MCF 10A (cell line): ENCODE measurements at regions of chr10 and their contacts with region 1.

Region 1: GRCh38 chr10:75401569-75402485 is at the start of gene ZNF503:
- DNase-seq: peak; percentile 97
- H3K4me3 Mint-ChIP-seq: peak within 1 kb of the TSS; percentile 80
- H3K27ac Mint-ChIP-seq: peak within 1 kb of the TSS; percentile 51
- H3K4me1 Mint-ChIP-seq: peaks cover 5% of the 10 kb centered on the region
- H3K27me3 Mint-ChIP-seq: no peaks in the 10 kb centered on the region
- CTCF ChIP-seq: no peak
- total RNA-seq, gene ZNF503: 7.3 and 8.1 TPM in 2 replicates

Region 2: DNA sequence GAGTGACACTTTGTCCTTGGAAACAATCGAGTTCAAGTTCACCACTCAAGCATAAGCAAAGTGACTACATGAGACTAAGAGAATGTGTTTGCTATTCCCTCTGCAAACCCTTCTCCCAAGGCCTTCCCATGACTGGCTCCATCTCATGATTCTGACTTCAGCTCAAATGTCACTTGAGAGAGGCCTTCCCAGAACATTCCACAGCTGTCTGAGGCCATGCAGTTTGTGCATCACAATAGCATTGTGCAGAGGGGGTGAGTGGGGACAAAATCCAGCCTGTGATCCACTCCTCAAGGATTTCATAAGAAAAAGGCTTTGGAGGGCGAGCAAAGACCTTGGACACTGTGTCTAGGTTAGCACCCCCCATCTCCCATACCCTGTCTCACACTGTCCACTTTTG is 22.7 kb after region 1 on chr10:
- CTCF ChIA-PET with region 1: interaction called, 5 read pairs
- POLR2A ChIA-PET with region 1: interaction called, 54 read pairs
- intact Hi-C with region 1: no loop called
- DNase-seq: no peak
- H3K4me3 Mint-ChIP-seq: no peak overlapping the region
- H3K27ac Mint-ChIP-seq: no peak overlapping the region
- H3K4me1 Mint-ChIP-seq: peaks cover 16% of the 10 kb centered on the region
- H3K27me3 Mint-ChIP-seq: no peaks in the 10 kb centered on the region
- CTCF ChIP-seq: no peak

Region 3: DNA sequence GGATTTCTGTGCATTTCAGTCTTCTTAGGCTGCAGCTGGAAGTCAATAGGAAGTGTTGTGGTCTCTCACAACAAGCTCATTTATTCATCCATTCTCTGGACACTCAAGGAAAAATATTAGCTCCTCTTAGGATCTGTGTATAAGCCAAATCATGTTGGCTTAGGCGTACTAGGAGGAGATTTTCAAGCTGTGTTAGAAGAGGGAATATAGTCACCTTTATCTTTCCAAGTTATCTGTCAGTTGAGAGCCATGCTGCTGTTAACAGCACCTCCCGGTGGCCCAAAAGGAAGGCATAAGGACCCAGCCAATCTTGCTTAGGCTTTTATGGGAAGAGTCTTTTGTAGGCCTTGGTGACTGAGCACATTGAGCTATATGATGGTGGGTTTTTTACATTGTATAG is 249.6 kb after region 1 on chr10:
- CTCF ChIA-PET with region 1: interaction called, 3 read pairs
- POLR2A ChIA-PET with region 1: interaction called, 4 read pairs
- intact Hi-C with region 1: loop called (anchors 1 kb)
- DNase-seq: peak; percentile 31
- H3K4me3 Mint-ChIP-seq: no peak overlapping the region
- H3K27ac Mint-ChIP-seq: no peak overlapping the region
- H3K4me1 Mint-ChIP-seq: peaks cover 4% of the 10 kb centered on the region
- H3K27me3 Mint-ChIP-seq: peaks cover 13% of the 10 kb centered on the region
- CTCF ChIP-seq: no peak

Region 4: GRCh38 chr10:76026905-76027304 is 625.1 kb after region 1 on chr10:
- CTCF ChIA-PET with region 1: interaction called, 5 read pairs
- POLR2A ChIA-PET with region 1: interaction called, 3 read pairs
- intact Hi-C with region 1: loop called (anchors 2 kb)
- DNase-seq: peak; percentile 39
- H3K4me3 Mint-ChIP-seq: no peak overlapping the region
- H3K27ac Mint-ChIP-seq: no peak overlapping the region
- H3K4me1 Mint-ChIP-seq: no peaks in the 10 kb centered on the region
- H3K27me3 Mint-ChIP-seq: no peaks in the 10 kb centered on the region
- CTCF ChIP-seq: no peak

Region 5: DNA sequence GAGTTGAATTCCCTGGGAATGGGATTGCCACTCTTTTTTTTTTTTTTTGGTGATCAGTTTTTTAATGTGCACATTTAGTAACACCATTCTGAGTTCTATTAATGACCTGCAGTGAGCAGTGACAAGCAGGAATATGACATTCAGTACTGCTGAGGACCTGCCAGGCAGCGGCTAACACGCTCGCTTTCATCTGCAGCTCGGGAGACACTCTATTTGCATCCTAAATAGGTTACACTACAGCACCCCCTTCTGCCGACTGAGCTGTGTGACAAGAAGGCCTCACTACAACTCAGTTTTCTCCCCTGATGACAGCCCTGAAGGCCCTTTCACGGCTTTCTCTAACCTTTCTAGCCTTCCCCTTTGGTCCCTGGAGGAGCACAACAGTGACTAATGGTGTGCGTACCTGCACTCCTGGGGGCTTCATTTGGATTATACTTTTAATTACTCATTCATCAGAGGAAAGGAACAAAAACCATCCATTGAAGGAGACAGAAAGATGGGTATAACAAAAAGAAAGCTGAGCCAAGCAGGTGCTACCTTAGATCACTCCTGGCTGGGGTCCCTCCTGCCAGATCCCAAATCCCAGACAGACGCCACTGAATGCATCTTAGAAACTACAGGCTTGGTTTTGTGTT is 902.0 kb after region 1 on chr10:
- CTCF ChIA-PET with region 1: interaction called, 3 read pairs
- POLR2A ChIA-PET with region 1: no interaction called
- intact Hi-C with region 1: loop called (anchors 1 kb)
- DNase-seq: peak; percentile 73
- H3K4me3 Mint-ChIP-seq: no peak overlapping the region
- H3K27ac Mint-ChIP-seq: no peak overlapping the region
- H3K4me1 Mint-ChIP-seq: no peaks in the 10 kb centered on the region
- H3K27me3 Mint-ChIP-seq: no peaks in the 10 kb centered on the region
- CTCF ChIP-seq: peak; percentile 46

Region 6: GRCh38 chr10:77111611-77112550 is 1710.1 kb after region 1 on chr10:
- CTCF ChIA-PET with region 1: interaction called, 3 read pairs
- POLR2A ChIA-PET with region 1: interaction called, 4 read pairs
- intact Hi-C with region 1: loop called (anchors 2 kb)
- DNase-seq: peak; percentile 72
- H3K4me3 Mint-ChIP-seq: no peak overlapping the region
- H3K27ac Mint-ChIP-seq: no peak overlapping the region
- H3K4me1 Mint-ChIP-seq: peaks cover 10% of the 10 kb centered on the region
- H3K27me3 Mint-ChIP-seq: no peaks in the 10 kb centered on the region
- CTCF ChIP-seq: peak; percentile 78